ENCODE measurements at regions of chr4 and their contacts with region 1.

Region 1: DNA sequence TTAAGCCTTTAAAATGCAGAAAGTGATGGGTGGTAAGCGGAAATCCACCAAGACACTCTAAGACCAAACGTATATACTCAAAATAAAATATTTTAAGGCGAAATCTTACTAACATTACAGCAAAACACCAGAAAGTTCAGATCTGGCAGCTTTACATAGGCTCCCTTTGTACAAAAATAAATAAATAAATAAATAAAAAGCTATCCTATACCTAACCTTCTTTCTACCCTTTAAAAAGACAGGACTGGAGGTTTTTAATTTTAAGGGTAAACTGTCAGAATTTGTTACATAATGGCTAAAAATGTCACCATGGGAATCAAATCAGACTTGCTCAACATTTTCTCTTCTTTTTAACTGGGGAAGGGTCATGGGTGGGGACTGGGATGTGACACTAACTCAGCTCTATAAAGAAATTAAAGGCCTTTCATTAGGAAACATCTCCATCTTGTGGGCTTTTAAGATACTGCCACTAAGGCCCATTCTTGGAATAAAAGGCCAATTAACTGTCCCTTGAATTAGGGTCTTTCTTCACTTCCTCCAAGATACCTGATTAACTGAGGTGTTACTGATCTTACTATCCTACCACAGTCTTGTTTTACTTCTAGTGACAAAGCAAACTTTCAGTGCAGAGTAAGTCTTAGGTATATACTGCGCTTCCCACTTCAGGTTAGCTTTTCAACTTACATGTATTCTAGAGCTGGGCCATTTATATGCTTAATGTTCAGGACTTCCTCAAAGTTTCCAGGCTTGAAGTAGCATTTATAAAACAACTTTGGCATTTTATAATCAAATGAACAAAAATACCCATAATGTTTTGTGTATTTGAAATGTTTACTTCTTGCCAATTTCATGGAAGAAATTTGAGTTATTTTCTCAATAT is 13.3 kb downstream of the HNRNPD start:
- DNase-seq: peak in 4 of 5 donors; percentile 39 to 42 (median 40)
- H3K4me3 ChIP-seq: no peak overlapping the region
- H3K4me3 Mint-ChIP-seq: peak overlapping the region in 5 of 8 donors; percentile 3 to 54 (median 17)
- H3K27ac ChIP-seq: peak overlapping the region; percentile 22
- H3K27ac Mint-ChIP-seq: peak overlapping the region; percentile 30 to 88 (median 62)
- H3K4me1 ChIP-seq: peaks cover 98% of the 10 kb centered on the region
- H3K4me1 Mint-ChIP-seq: peaks cover 59 to 94% (median 77%) of the 10 kb centered on the region in 4 donors
- H3K27me3 ChIP-seq: no peaks in the 10 kb centered on the region
- H3K27me3 Mint-ChIP-seq: no peaks in the 10 kb centered on the region

Region 2: GRCh38 chr4:81844717-81845116 is 515.8 kb before region 1 on chr4:
- CTCF ChIA-PET with region 1: no interaction called
- POLR2A ChIA-PET with region 1: no interaction called
- intact Hi-C with region 1: loop called (anchors 5 kb)
- DNase-seq: peak; percentile 64 to 73 (median 71)
- H3K4me3 ChIP-seq: no peak overlapping the region
- H3K4me3 Mint-ChIP-seq: no peak overlapping the region
- H3K27ac ChIP-seq: no peak overlapping the region
- H3K27ac Mint-ChIP-seq: no peak overlapping the region
- H3K4me1 ChIP-seq: no peaks in the 10 kb centered on the region
- H3K4me1 Mint-ChIP-seq: no peaks in the 10 kb centered on the region
- H3K27me3 ChIP-seq: no peaks in the 10 kb centered on the region
- H3K27me3 Mint-ChIP-seq: no peaks in the 10 kb centered on the region

Region 3: DNA sequence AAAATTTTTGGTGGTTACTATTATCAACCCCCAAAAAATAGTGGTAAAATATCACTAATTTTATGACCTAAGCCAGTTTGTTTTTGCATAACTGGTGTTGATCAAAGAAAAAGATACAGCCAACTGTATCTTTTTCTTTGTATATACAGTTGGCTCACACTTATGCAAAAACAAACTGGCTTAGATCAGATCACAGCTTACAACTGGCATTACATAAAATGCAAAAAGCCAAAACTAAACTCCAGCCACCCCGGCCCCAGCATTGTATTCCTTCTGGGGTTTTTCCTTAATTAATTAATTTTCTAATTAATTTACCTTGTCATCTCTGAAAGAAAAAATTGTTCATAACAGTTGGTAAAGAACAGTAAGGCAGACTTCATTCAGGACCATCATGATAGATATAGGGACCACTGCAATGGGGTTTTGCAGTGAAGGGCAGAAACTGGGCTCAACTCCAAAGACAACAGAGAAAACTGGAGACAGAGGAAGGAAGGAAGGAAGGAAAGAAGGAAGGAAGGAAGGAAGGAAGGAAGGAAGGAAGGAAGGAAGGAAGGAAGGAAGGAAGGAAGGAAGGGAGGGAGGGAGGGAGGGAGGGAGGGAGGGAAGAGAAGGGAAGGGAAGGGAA is 188.9 kb before region 1 on chr4:
- CTCF ChIA-PET with region 1: no interaction called
- POLR2A ChIA-PET with region 1: no interaction called
- intact Hi-C with region 1: no loop called
- DNase-seq: no peak
- H3K4me3 ChIP-seq: no peak overlapping the region
- H3K4me3 Mint-ChIP-seq: no peak overlapping the region
- H3K27ac ChIP-seq: no peak overlapping the region
- H3K27ac Mint-ChIP-seq: peak overlapping the region in 1 of 7 donors; percentile 19
- H3K4me1 ChIP-seq: no peaks in the 10 kb centered on the region
- H3K4me1 Mint-ChIP-seq: peaks cover 0 to 2% (median under 1%) of the 10 kb centered on the region in 4 donors
- H3K27me3 ChIP-seq: no peaks in the 10 kb centered on the region
- H3K27me3 Mint-ChIP-seq: peaks cover 4 to 7% of the 10 kb centered on the region in 2 donors

Region 4: DNA sequence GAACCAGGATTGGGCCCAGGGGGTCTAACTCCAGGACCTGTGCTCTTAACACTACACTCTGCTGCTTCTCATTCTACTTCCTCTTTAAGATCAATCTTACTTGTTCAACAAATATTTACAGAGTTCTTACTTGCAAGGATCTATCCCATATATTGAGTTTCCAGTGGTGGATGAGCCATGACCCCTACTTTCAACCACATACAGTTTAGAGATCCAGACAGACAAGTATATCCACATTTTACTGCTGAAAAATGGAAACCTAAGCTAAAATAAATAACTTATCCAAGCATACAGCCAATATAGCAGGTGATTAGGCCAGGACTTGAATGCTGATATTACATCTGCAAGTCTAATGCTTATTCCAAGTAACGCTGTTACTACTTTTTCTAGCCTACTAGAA is 182.6 kb after region 1 on chr4:
- CTCF ChIA-PET with region 1: no interaction called
- POLR2A ChIA-PET with region 1: no interaction called
- intact Hi-C with region 1: no loop called
- DNase-seq: no peak
- H3K4me3 ChIP-seq: no peak overlapping the region
- H3K4me3 Mint-ChIP-seq: no peak overlapping the region
- H3K27ac ChIP-seq: no peak overlapping the region
- H3K27ac Mint-ChIP-seq: no peak overlapping the region
- H3K4me1 ChIP-seq: no peaks in the 10 kb centered on the region
- H3K4me1 Mint-ChIP-seq: no peaks in the 10 kb centered on the region
- H3K27me3 ChIP-seq: no peaks in the 10 kb centered on the region
- H3K27me3 Mint-ChIP-seq: peaks cover 10 to 17% of the 10 kb centered on the region in 2 donors